ENCODE measurements at regions of chr15 and their contacts with region 1.

Region 1: DNA sequence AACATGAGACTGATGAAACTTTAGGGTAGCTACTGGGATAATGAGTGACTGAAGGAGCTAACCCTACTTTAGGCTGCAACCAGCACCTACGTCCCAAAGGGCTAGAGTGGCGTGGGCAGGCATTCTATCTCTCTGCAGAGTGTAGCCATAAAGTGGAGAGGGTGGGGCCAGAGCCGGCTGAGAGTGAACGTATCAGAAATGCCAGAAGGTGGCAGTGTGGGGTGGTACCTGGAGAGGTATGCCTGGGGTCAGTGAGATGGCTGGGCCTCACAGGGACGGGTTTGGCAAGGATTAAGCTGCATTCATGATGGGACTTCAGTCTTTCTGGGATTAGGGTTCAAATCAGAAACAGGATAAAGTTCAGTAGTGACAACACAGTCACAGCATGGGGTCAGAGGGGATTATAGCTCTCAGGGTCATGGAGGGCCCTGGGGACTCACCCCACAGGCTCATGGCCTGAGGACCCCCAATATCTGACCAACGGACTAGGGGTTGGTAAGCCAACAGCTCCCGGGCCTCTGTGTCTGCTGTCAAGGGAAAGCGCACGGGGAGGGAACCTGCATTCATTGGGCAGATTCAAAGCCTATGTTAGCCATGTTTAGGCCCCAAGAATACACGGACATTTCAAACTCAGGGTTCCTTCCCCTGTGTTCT is 86.5 kb upstream of the FOXB1 start:
- DNase-seq: peak; percentile 94
- H3K4me3 Mint-ChIP-seq: no peak overlapping the region
- H3K27ac Mint-ChIP-seq: no peak overlapping the region
- H3K4me1 Mint-ChIP-seq: peaks cover 25% of the 10 kb centered on the region
- H3K27me3 Mint-ChIP-seq: peaks cover 36% of the 10 kb centered on the region
- CTCF ChIP-seq: peak; percentile 75

Region 2: GRCh38 chr15:59689626-59690236 is 227.9 kb before region 1 on chr15:
- CTCF ChIA-PET with region 1: interaction called, 4 read pairs
- intact Hi-C with region 1: loop called (anchors 10 kb)
- DNase-seq: peak; percentile 85
- H3K4me3 Mint-ChIP-seq: peak overlapping the region; percentile 77
- H3K27ac Mint-ChIP-seq: peak overlapping the region; percentile 29
- H3K4me1 Mint-ChIP-seq: peaks cover 40% of the 10 kb centered on the region
- H3K27me3 Mint-ChIP-seq: no peaks in the 10 kb centered on the region
- CTCF ChIP-seq: no peak

Region 3: GRCh38 chr15:59933607-59934006 is 16.0 kb after region 1 on chr15:
- CTCF ChIA-PET with region 1: no interaction called
- intact Hi-C with region 1: no loop called
- DNase-seq: no peak
- H3K4me3 Mint-ChIP-seq: no peak overlapping the region
- H3K27ac Mint-ChIP-seq: no peak overlapping the region
- H3K4me1 Mint-ChIP-seq: no peaks in the 10 kb centered on the region
- H3K27me3 Mint-ChIP-seq: peaks cover 42% of the 10 kb centered on the region
- CTCF ChIP-seq: no peak

Region 4: GRCh38 chr15:60006203-60006862 is 88.7 kb after region 1 on chr15:
- CTCF ChIA-PET with region 1: interaction called, 3 read pairs
- intact Hi-C with region 1: loop called (anchors 5 kb)
- DNase-seq: peak; percentile 79
- H3K4me3 Mint-ChIP-seq: peak overlapping the region; percentile 97
- H3K27ac Mint-ChIP-seq: peak overlapping the region; percentile 92
- H3K4me1 Mint-ChIP-seq: peaks cover 50% of the 10 kb centered on the region
- H3K27me3 Mint-ChIP-seq: peaks cover 65% of the 10 kb centered on the region
- CTCF ChIP-seq: no peak

Region 5: DNA sequence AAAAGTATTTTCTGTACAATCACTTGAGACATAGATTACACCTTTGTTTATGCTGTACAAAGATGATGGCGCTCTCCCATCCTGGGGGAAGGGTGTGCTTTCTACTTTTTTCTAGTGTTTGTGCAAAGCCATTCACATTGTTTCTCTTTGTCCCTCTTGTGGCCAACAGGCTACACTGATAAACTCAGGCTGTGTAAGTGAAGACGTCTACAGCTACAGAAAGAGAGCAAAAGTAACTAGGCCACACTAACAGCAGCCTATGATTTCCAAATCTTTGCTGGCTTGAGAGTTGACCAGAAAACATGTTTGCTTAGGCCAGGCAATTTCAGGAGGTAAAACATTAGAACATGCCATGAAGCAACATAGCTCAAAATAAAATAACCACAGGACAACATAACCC is 161.6 kb after region 1 on chr15:
- CTCF ChIA-PET with region 1: interaction called, 13 read pairs
- intact Hi-C with region 1: loop called (anchors 5 kb)
- DNase-seq: peak; percentile 19
- H3K4me3 Mint-ChIP-seq: no peak overlapping the region
- H3K27ac Mint-ChIP-seq: no peak overlapping the region
- H3K4me1 Mint-ChIP-seq: no peaks in the 10 kb centered on the region
- H3K27me3 Mint-ChIP-seq: no peaks in the 10 kb centered on the region
- CTCF ChIP-seq: peak; percentile 27

Region 6: DNA sequence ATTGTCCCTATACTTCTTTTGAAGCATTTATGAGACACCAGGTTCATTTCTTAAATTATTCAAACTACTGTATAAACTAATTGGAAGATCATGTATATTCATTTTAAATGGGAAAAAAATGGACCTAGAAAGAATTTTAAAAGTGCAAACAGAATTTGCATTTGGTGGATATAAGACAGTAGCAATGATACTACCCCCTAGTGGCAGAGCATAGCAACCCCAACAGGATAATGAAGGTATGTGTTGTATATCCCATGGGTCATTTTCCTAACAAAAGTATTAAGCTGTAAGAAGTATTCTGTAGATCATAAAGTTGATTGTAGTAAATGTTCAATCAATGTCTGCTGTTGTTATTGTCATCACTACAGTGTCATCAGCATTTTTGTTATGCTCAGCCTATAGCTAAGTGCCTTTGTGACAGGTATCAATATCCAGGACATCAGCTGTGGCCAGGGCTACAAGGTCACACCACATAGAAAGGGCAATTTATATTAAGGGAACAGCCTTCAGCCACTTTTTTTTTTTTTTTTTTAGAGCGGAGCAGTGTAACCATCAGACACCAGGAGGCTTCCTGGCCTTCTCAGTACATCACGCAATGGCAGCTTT is 262.3 kb after region 1 on chr15:
- CTCF ChIA-PET with region 1: interaction called, 6 read pairs
- intact Hi-C with region 1: loop called (anchors 1 kb)
- DNase-seq: peak; percentile 58
- H3K4me3 Mint-ChIP-seq: no peak overlapping the region
- H3K27ac Mint-ChIP-seq: no peak overlapping the region
- H3K4me1 Mint-ChIP-seq: peaks cover 7% of the 10 kb centered on the region
- H3K27me3 Mint-ChIP-seq: peaks cover 61% of the 10 kb centered on the region
- CTCF ChIP-seq: peak; percentile 66